ENCODE measurements at regions of chr10 and their contacts with region 1.

Region 1: DNA sequence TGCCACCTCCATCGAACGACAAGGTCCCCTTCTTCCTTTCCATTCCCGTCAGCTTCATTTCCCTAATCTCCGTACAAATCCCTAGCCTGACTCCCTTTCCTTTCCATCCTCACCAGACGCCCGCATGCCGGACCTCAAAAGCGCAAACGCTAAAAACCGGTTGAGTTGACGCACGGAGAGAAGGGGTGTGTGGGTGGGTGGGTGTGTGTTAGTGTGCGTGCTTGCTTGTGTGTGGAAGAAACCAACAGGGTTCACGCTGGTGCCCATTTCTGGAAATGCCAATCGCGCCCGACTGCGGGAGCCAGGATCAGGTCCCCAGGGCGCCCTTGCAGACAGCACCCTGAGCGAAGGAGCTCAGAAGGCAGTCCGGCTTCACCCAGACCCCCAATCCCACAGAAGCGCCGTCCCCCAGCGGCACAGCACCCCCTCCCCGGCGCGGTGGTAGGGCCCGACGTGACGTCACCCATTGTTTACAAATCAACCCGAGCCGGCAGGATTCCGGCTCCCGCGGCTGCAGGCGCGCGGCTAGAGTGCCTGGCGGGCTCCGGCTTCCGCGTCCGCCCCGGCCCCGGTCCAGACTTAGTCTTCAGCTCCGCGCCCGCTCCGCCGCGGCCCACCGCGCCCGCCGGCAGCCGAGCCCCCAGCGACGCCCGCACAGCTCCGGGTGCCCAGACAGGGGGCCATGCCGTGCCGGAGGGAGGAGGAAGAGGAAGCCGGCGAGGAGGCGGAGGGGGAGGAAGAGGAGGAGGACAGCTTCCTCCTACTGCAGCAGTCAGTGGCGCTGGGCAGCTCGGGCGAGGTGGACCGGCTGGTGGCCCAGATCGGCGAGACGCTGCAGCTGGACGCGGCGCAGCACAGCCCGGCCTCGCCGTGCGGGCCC is at the start of gene FRAT1:
- DNase-seq: peak; percentile 88
- H3K4me3 ChIP-seq: peak within 1 kb of the TSS; percentile 79
- H3K27ac ChIP-seq: peak within 1 kb of the TSS; percentile 98
- H3K27me3 ChIP-seq: peaks cover 6% of the 10 kb centered on the region
- CTCF ChIP-seq: no peak
- polyA plus RNA-seq, gene FRAT1: 1.1 and 1.2 TPM in 2 replicates

Region 2: GRCh38 chr10:97292097-97292862 is 26.7 kb before region 1 on chr10 and contains the start of gene ARHGAP19:
- CTCF ChIA-PET with region 1: no interaction called
- POLR2A ChIA-PET with region 1: interaction called, 10 read pairs
- DNase-seq: peak; percentile 95
- H3K4me3 ChIP-seq: peak within 1 kb of the TSS; percentile 83
- H3K27ac ChIP-seq: peak within 1 kb of the TSS; percentile 95
- H3K27me3 ChIP-seq: no peaks in the 10 kb centered on the region
- CTCF ChIP-seq: peak; percentile 18; the same call in 1 of the 2 replicates
- polyA plus RNA-seq, gene ARHGAP19: 7.8 and 8.6 TPM in 2 replicates

Region 3: DNA sequence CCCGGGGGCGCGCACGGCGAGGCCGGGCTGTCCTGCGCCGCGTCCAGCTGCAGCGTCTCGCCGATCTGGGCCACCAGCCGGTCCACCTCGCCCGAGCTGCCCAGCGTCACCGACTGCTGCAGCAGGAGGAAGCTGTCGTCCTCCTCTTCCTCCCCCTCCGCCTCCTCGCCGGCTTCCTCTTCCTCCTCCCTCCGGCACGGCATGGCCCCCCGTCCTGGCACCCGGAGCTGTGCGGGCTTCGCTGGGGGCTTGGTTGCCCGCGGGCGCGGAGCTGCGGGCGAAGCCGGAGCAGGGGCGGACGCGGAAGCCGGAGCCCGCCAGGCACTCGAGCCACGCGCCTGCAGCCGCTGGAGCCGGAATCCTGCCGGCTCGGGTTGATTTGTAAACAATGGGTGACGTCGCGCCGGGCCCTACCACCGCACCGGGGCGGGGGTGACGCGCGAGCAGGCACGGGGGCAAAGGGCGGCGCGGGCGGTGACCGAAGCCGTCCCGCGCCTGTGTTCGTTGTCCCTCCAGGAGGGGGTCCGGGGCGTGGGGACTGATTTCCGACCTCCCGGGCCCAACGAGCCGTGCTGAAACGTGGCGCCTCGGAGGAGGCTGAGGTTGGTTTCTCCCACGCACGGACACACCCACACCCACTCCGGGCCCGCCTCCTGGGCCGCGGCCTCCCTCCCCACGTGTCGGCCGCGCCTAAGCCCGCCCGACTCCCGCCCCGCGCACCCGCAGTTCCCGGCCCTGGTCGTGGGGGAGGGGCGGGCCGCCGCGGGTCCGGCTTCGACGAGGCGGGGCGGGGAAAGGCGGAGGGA is 15.6 kb after region 1 on chr10 and contains the start of gene FRAT2:
- CTCF ChIA-PET with region 1: interaction called, 9 read pairs
- POLR2A ChIA-PET with region 1: interaction called, 18 read pairs
- DNase-seq: peak; percentile 74
- H3K4me3 ChIP-seq: peak within 1 kb of the TSS; percentile 75
- H3K27ac ChIP-seq: peak within 1 kb of the TSS; percentile 91
- H3K27me3 ChIP-seq: peaks cover 32% of the 10 kb centered on the region
- CTCF ChIP-seq: no peak
- polyA plus RNA-seq, gene FRAT2: 2.4 and 2.6 TPM in 2 replicates

Region 4: GRCh38 chr10:97400665-97401454 is 81.8 kb after region 1 on chr10 and contains the start of gene RRP12:
- CTCF ChIA-PET with region 1: no interaction called
- POLR2A ChIA-PET with region 1: no interaction called
- DNase-seq: peak; percentile 87
- H3K4me3 ChIP-seq: peak within 1 kb of the TSS; percentile 85
- H3K27ac ChIP-seq: peak within 1 kb of the TSS; percentile 77
- H3K27me3 ChIP-seq: no peaks in the 10 kb centered on the region
- CTCF ChIP-seq: no peak; the same call in none of the 2 replicates
- polyA plus RNA-seq, gene RRP12: 10.6 and 13.4 TPM in 2 replicates

Measured in AG04450 (cell line).